Activated CD4-positive, alpha-beta T cell treated with anti-CD3 and anti-CD28 coated beads for 36 hours (primary cell): ENCODE measurements at regions of chr2 and their contacts with region 1.

Region 1: DNA sequence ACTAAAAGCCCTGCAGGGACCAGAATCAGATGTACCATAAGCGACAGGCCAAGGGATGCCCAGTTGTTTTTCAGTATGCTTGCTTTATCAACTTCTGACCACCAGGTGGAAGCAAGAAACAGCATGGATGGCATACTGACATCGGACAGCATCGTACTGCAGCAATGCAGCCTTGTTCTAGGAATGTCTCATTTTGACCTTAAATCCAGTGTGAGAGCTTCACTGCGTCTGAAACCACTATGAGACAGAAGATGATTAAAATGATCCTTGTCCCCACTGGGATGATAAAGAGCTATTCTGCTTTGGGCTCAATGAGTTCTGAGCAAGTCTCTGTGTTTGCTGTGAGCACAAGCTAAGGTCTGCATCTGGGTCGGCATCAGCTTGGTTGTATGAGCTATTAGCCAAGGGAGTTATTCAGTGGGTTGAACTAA is 54.3 kb downstream of the CDK15 start:
- DNase-seq: peak; percentile 57
- ATAC-seq: peak; percentile 82
- H3K4me3 Mint-ChIP-seq: no peak overlapping the region
- H3K27ac Mint-ChIP-seq: no peak overlapping the region
- H3K4me1 Mint-ChIP-seq: peaks cover 16% of the 10 kb centered on the region
- H3K27me3 Mint-ChIP-seq: peaks cover 15% of the 10 kb centered on the region

Region 2: GRCh38 chr2:202033321-202034248 is 172.9 kb after region 1 on chr2 and contains the start of gene FZD7:
- CTCF ChIA-PET with region 1: no interaction called
- POLR2A ChIA-PET with region 1: no interaction called
- intact Hi-C with region 1: loop called in 1 of 2 experiments (anchors 5 kb)
- DNase-seq: peak; percentile 91
- ATAC-seq: peak; percentile 83
- H3K4me3 Mint-ChIP-seq: peak within 1 kb of the TSS; percentile 72
- H3K27ac Mint-ChIP-seq: peak within 1 kb of the TSS; percentile 22
- H3K4me1 Mint-ChIP-seq: peaks cover 13% of the 10 kb centered on the region
- H3K27me3 Mint-ChIP-seq: peaks cover 21% of the 10 kb centered on the region
- total RNA-seq, gene FZD7: 0.58 to 0.94 TPM

Region 3: DNA sequence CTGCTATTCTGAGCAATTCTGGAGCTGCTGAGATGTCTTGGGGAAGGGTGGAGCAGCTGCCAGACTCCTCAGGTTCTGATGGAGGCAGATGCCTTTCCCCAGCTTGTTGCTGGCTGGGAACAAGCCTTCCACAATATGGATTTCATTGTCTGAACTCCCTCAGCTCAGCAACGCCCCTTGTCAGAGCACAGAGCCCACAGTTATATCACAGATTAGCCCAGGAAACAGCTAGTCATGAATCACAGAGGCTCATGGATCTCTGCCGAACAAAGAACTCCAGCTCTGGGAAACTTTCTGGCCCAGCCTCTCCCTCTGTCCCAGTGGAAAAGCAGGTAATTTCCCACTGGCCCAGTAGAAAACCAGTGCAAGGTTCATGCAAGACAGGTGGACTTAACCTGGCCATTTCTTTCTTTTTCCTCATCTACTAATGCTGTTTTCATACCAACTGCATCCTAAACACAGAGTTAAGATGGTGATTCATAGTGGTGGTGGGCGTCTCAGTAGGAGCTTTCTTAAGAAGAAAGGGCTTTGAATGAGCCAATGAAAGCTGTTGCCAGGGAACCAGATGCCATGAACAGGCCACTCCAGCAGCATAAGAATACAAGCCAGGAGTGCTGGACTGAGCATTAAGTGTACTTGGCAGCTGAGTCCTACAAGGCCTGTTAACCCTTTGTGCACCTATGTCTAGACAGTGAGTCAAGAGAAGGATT is 203.7 kb after region 1 on chr2:
- CTCF ChIA-PET with region 1: interaction called, 6 read pairs
- POLR2A ChIA-PET with region 1: no interaction called
- intact Hi-C with region 1: loop called in 1 of 2 experiments (anchors 5 kb)
- DNase-seq: peak; percentile 33
- ATAC-seq: peak; percentile 78
- H3K4me3 Mint-ChIP-seq: no peak overlapping the region
- H3K27ac Mint-ChIP-seq: no peak overlapping the region
- H3K4me1 Mint-ChIP-seq: peaks cover 4% of the 10 kb centered on the region
- H3K27me3 Mint-ChIP-seq: peaks cover 3% of the 10 kb centered on the region

Region 4: GRCh38 chr2:202171241-202171825 is 310.7 kb after region 1 on chr2:
- CTCF ChIA-PET with region 1: interaction called, 45 read pairs
- POLR2A ChIA-PET with region 1: no interaction called
- intact Hi-C with region 1: no loop called
- DNase-seq: peak; percentile 32
- ATAC-seq: no peak
- H3K4me3 Mint-ChIP-seq: no peak overlapping the region
- H3K27ac Mint-ChIP-seq: no peak overlapping the region
- H3K4me1 Mint-ChIP-seq: peaks cover 24% of the 10 kb centered on the region
- H3K27me3 Mint-ChIP-seq: peaks cover 12% of the 10 kb centered on the region